ENCODE measurements at regions of chr1 and their contacts with region 1.

Region 1: DNA sequence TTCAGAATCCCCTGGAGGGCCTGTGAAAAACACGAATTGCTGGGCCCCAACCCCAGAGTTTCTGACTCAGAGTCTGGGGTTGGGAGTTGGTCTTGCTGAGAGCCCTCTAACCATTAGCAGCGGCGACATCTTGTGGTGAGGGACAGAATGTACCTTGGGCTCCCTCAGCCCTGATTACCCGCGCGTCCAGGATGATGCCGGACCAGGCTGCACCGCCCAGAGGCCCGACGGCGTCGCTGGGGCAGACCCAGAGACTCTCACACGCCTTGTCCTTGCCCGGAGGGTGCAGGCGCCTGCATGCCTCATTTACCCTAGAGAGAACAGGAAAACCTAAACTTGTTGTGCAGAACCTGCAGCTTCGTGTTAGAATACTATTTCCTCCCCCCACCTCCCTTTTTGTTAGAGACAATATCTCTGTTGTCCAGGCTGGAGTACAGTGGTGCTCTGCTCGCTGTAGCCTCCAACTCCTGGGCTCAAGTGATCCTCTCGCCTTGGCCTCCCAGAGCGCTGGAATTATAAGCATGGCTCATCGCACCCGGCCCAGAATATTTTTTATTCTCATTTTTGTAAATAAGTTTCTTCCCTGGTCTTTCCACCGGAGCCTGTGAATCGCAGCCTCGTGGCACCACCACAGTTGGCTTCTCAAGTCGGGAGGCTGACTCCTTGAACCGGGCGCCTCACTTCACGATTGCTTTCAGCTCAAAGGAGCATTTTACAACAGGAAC is 22.2 kb upstream of the RD3 start:
- DNase-seq: peak; percentile 92 to 97
- ATAC-seq: peak; percentile 72 to 86
- H3K4me3 ChIP-seq: no peak overlapping the region
- H3K27ac ChIP-seq: peak overlapping the region; percentile 94 to 95
- H3K4me1 ChIP-seq: peaks cover 31% of the 10 kb centered on the region
- CTCF ChIP-seq: peak; percentile 87
- EP300 ChIP-seq: no peak
- POLR2A ChIP-seq: peak; percentile 35; the same call in 1 of the 2 replicates
- RAD21 ChIP-seq: peak; percentile 92

Region 2: GRCh38 chr1:210989905-210990304 is 524.3 kb before region 1 on chr1:
- CTCF ChIA-PET with region 1: no interaction called
- POLR2A ChIA-PET with region 1: no interaction called
- DNase-seq: no peak
- ATAC-seq: no peak
- H3K4me3 ChIP-seq: no peak overlapping the region
- H3K27ac ChIP-seq: no peak overlapping the region
- H3K4me1 ChIP-seq: no peaks in the 10 kb centered on the region; the same call in 2 of the 3 replicates
- CTCF ChIP-seq: no peak
- EP300 ChIP-seq: no peak
- POLR2A ChIP-seq: no peak
- RAD21 ChIP-seq: no peak

Region 3: GRCh38 chr1:211382714-211383480 is 131.3 kb before region 1 on chr1:
- CTCF ChIA-PET with region 1: interaction called, 8 read pairs
- POLR2A ChIA-PET with region 1: interaction called, 10 read pairs
- DNase-seq: peak; percentile 88 to 95
- ATAC-seq: peak; percentile 99
- H3K4me3 ChIP-seq: peak overlapping the region; percentile 81
- H3K27ac ChIP-seq: peak overlapping the region; percentile 97
- H3K4me1 ChIP-seq: peaks cover 9% of the 10 kb centered on the region; the same call in 2 of the 3 replicates
- CTCF ChIP-seq: no peak
- EP300 ChIP-seq: no peak
- POLR2A ChIP-seq: peak; percentile 95
- RAD21 ChIP-seq: no peak

Region 4: DNA sequence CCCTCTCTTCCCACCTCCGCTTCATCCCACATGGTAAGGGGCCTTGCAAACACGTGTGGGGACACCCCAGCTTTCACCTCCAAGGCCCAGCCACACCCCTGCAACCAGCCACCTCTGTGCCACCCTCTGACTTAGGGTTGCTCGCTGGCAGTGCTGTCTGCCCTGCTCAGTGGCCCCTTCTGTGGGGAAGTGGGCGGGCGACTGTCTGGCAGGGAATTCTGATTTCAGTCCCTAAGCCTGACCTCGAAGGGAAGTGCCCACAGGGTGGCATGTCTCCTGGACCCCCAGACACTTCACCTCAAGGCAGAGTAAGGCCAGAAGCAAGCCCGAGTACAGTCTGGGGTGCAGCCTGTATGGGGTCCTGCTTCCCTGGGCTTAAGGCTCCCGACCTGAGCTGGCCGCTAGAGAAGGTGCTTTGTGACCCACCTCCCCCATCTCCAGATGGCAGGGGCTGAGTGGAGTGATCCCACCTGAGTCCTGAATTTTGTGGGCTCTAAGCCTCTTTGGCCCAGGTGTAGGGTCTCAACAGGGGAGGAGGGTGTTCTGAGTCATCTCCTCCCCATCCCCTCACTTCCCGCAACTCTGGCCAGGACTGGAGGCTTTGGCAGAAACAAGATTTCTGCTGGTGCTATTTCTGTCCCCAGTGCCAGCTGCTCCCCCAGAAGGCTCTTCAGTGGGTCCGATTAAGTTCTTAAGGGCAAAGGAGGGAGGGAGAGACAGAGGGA is 29.3 kb before region 1 on chr1:
- CTCF ChIA-PET with region 1: interaction called, 57 read pairs
- POLR2A ChIA-PET with region 1: interaction called, 7 read pairs
- DNase-seq: no peak
- ATAC-seq: peak in 1 of 2 experiments; percentile 21; a peak in 2 of 6 replicates
- H3K4me3 ChIP-seq: no peak overlapping the region
- H3K27ac ChIP-seq: no peak overlapping the region
- H3K4me1 ChIP-seq: no peaks in the 10 kb centered on the region
- CTCF ChIP-seq: no peak
- EP300 ChIP-seq: no peak
- POLR2A ChIP-seq: no peak
- RAD21 ChIP-seq: no peak

Region 5: DNA sequence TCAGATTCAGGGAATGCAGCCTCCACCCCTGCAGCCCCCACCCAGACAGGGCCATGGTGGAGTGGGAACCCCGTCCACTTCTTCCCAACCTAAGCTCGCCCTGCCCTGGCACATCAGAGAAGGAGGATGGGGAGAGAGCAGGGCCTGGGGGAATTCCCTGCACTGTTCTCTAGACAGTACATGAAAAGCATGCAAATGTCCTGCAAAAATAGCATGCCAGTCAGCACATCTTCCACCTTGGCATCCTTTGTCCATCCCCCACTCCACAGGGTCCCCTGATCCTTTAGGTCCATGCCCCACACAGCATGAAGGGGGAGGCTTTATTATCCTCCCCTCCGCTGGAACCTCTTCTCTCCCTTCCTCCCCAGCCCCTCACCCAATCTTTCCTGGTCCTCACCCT is 12.8 kb after region 1 on chr1:
- CTCF ChIA-PET with region 1: interaction called, 49 read pairs
- POLR2A ChIA-PET with region 1: interaction called, 5 read pairs
- DNase-seq: no peak
- ATAC-seq: no peak
- H3K4me3 ChIP-seq: no peak overlapping the region
- H3K27ac ChIP-seq: no peak overlapping the region
- H3K4me1 ChIP-seq: peaks cover 9% of the 10 kb centered on the region; the same call in 2 of the 3 replicates
- CTCF ChIP-seq: no peak
- EP300 ChIP-seq: no peak
- POLR2A ChIP-seq: no peak
- RAD21 ChIP-seq: no peak

Region 6: GRCh38 chr1:211578640-211579433 is 64.6 kb after region 1 on chr1 and contains the start of gene SLC30A1:
- CTCF ChIA-PET with region 1: interaction called, 28 read pairs
- POLR2A ChIA-PET with region 1: interaction called, 15 read pairs
- DNase-seq: peak; percentile 99
- ATAC-seq: peak; percentile 77 to 92
- H3K4me3 ChIP-seq: peak within 1 kb of the TSS; percentile 91
- H3K27ac ChIP-seq: peak within 1 kb of the TSS; percentile 95 to 96
- H3K4me1 ChIP-seq: peaks cover 33% of the 10 kb centered on the region
- CTCF ChIP-seq: no peak
- EP300 ChIP-seq: no peak
- POLR2A ChIP-seq: peak; percentile 88
- RAD21 ChIP-seq: no peak
- polyA plus RNA-seq, gene SLC30A1: 18.4 and 20.6 TPM in 2 replicates

Region 7: DNA sequence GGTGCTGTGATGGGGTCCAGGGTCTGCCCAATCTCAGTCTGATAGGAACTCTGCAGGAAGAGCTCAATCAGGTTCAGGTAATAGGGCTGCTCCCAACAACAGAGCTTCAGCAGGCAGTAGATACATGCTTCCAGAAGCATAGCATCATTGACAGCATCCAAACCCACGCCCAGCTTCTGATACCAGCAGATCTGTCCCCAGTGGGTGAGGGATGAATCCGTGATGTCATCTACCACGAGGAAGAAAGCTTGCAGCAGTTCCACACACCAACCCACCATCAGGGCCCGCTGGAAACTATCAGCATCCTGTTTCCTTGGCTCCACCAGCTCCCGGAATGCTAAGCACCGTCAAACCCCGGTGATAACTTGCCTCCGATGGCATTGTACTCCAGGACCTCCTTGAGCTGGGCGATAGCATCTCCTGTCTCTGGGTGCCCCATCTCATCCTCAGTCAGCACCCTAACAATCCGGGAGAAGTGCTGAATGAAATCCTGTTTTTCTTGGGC is 146.6 kb after region 1 on chr1:
- CTCF ChIA-PET with region 1: interaction called, 127 read pairs
- POLR2A ChIA-PET with region 1: no interaction called
- DNase-seq: no peak
- ATAC-seq: no peak
- H3K4me3 ChIP-seq: no peak overlapping the region
- H3K27ac ChIP-seq: no peak overlapping the region
- H3K4me1 ChIP-seq: no peaks in the 10 kb centered on the region; the same call in 2 of the 3 replicates
- CTCF ChIP-seq: no peak
- EP300 ChIP-seq: no peak
- POLR2A ChIP-seq: no peak
- RAD21 ChIP-seq: no peak